A549 (cell line): ENCODE measurements at regions of chr22 and their contacts with region 1.

Region 1: GRCh38 chr22:20568989-20569769 is 61.8 kb downstream of the MED15 start:
- DNase-seq: peak; percentile 75 to 87
- ATAC-seq: peak; percentile 78 to 85
- H3K4me3 ChIP-seq: no peak overlapping the region
- H3K27ac ChIP-seq: peak overlapping the region; percentile 63 to 83
- H3K4me1 ChIP-seq: peaks cover 64% of the 10 kb centered on the region
- CTCF ChIP-seq: no peak
- EP300 ChIP-seq: no peak
- POLR2A ChIP-seq: no peak
- RAD21 ChIP-seq: no peak

Region 2: DNA sequence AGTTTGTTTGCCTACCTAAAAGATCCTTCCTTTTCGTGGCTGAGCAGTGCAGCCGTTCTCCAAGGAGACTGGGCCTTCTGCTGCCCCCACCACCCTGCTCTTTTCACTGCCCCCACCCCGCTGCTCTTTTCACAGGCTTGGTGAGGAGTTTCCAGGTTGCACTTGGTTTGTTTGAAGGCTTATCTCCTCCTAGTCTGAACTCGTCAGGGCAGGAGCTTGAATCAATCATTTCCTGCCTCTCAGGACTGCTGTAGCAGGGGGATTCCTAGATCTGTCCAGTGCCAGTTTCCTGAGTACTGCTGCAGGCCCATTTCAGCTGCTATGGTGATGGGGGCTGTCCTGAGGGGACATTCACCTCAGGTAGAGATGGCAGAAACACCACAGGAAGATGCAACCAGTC is 51.8 kb before region 1 on chr22:
- CTCF ChIA-PET with region 1: interaction called, 10 read pairs
- POLR2A ChIA-PET with region 1: no interaction called
- DNase-seq: no peak
- ATAC-seq: no peak
- H3K4me3 ChIP-seq: no peak overlapping the region
- H3K27ac ChIP-seq: no peak overlapping the region
- H3K4me1 ChIP-seq: peaks cover 33% of the 10 kb centered on the region; the same call in 2 of the 3 replicates
- CTCF ChIP-seq: no peak
- EP300 ChIP-seq: no peak
- POLR2A ChIP-seq: no peak
- RAD21 ChIP-seq: no peak

Region 3: DNA sequence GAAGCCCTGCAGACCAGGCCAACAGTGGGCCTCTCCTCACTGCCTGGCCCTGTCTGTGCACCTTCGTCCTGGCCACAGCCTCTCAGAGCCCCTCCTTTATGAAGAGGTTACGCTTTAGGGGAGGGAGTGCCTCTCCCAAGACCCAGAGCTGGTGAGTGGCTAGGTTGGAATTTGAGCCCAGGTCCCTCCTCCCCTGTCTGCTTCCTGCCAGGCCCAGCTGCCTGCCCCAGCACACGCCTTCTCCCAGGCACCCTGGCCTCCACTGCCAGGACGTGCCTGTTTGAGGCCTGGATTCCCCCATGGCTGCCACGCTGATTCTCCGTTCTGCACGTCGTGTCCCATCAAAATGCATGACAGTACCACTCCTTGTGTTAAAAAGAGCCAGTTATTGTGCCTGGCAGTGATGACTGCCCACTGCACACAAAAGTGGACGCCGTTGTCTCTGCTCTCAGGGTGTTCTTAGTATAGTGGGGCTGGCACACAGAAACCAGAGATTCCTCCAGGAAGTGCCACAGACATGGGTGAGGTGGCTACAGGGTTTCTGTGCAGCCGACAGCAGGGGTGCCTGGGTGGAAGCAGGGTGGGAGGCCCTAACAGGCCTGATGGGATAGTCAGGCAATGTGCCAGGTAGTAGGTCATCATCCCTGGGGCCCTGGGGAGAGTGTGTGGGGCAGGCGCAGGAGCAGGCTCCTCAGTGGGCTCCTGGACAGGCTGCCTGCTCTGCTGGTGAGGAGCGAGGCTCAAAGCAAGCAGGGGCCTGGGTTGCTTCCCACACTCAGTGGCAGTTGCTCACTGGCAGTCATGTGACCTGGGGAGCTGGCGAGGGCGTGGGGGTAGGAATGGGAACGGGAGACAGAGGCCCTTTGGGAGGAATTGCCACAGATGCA is 37.6 kb before region 1 on chr22:
- CTCF ChIA-PET with region 1: interaction called, 14 read pairs
- POLR2A ChIA-PET with region 1: interaction called, 5 read pairs
- DNase-seq: peak; percentile 68 to 87
- ATAC-seq: peak; percentile 92
- H3K4me3 ChIP-seq: no peak overlapping the region
- H3K27ac ChIP-seq: peak overlapping the region; percentile 91 to 92
- H3K4me1 ChIP-seq: peaks cover 58% of the 10 kb centered on the region
- CTCF ChIP-seq: no peak
- EP300 ChIP-seq: no peak
- POLR2A ChIP-seq: peak; percentile 42
- RAD21 ChIP-seq: no peak

Region 4: DNA sequence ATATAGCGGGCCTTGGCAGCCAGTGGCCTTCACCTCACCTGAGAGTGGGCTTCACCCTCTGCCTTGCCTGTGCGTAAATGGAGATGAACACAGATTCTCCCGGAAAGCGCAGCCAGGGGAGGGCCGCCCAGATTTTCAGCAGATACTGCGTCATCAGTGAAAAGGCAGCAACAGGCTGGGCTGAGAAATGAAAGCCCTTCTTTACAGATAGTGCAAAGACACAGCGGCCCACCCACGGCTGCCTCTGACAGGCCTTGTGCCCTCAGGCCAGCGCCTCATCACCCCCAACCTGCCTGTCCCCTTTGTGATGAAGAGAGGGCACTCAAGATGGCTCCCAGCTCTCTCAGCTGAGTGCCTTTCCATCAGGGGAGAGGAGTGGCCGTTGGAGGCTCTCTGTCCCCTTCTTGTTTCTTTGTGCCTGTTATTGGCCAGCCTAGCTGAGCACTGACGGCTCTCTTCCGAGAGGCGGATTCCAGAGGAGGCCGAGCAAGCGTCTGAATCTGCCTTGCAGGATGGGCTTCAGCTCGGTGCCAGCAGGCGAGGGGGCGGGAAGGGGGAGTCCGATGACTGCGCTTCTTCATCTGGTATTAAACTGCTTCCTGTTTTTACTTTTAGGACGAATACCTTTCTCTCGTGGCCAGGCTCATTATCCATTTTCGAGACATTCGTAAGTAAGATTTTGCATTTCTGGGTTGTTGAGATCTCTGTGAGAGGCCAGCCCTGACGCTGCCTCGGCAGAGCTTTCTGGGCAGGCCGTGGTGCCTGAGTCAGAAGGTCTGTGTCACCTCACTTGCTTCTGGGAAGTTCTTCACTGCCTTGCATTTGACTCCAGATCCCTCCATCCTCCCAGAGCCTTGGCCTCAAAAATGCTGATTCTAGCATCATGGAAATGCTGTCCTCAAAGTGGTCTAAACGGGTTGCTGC is 18.1 kb before region 1 on chr22:
- CTCF ChIA-PET with region 1: interaction called, 43 read pairs
- POLR2A ChIA-PET with region 1: no interaction called
- DNase-seq: no peak
- ATAC-seq: 0 out of 6 replicates have a peak, but pooled peaks of 1 of the 2 experiments have one; percentile 31
- H3K4me3 ChIP-seq: no peak overlapping the region
- H3K27ac ChIP-seq: no peak overlapping the region
- H3K4me1 ChIP-seq: peaks cover 12% of the 10 kb centered on the region; the same call in 2 of the 3 replicates
- CTCF ChIP-seq: no peak
- EP300 ChIP-seq: no peak
- POLR2A ChIP-seq: no peak
- RAD21 ChIP-seq: no peak

Region 5: DNA sequence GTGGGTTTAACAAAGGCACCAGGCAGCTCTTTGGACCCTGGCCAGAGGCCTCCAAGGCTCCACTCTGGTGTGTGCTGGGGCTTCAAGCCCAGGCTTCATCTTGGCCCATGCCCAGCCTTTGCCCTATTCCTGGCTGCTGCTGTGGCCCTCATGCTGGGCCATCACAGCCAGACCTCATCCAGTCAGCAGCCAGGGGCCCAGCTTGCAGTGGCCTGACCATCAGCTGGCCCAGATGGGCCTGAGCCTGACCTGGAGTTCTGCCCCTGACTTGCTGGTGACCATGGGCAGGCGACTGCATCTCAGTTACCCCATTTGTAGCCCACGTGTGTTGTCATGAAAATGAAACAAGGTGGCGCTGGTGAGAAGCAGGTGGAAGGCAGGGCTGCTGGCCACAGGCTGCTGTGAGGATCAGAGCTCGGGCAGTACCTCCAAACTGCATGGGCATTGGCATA is 14.3 kb after region 1 on chr22:
- CTCF ChIA-PET with region 1: interaction called, 41 read pairs
- POLR2A ChIA-PET with region 1: no interaction called
- DNase-seq: peak in 1 of 2 experiments; percentile 20
- ATAC-seq: peak in 1 of 2 experiments; percentile 43; a peak in 3 of 6 replicates
- H3K4me3 ChIP-seq: no peak overlapping the region
- H3K27ac ChIP-seq: no peak overlapping the region
- H3K4me1 ChIP-seq: no peaks in the 10 kb centered on the region
- CTCF ChIP-seq: peak; percentile 17; the same call in 1 of the 3 replicates
- EP300 ChIP-seq: no peak
- POLR2A ChIP-seq: no peak
- RAD21 ChIP-seq: no peak